ENCODE measurements at regions of chr2 and their contacts with region 1.

Region 1: DNA sequence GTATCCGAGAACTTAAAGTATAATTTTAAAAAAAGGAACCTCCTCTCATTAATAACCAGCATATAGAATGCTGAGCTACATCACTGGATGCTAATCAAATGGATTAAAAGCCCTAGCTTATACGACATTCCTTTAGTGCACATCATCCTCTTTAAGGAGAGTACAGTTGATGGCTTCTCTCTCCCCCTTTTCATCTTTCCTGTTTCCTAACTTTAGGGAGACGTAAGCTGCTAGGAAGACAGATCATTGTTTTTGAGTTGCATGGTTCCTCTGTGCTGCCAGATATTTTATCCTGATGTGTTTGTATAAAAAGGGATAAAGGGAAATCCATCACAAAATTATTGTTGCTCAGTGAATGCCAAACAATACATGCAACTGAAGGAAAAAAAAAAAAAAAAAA is 94.2 kb downstream of the SLC8A1 start:
- DNase-seq: no peak
- H3K4me3 Mint-ChIP-seq: no peak overlapping the region
- H3K27ac Mint-ChIP-seq: no peak overlapping the region
- H3K4me1 Mint-ChIP-seq: no peaks in the 10 kb centered on the region
- H3K27me3 Mint-ChIP-seq: no peaks in the 10 kb centered on the region
- CTCF ChIP-seq: no peak

Region 2: DNA sequence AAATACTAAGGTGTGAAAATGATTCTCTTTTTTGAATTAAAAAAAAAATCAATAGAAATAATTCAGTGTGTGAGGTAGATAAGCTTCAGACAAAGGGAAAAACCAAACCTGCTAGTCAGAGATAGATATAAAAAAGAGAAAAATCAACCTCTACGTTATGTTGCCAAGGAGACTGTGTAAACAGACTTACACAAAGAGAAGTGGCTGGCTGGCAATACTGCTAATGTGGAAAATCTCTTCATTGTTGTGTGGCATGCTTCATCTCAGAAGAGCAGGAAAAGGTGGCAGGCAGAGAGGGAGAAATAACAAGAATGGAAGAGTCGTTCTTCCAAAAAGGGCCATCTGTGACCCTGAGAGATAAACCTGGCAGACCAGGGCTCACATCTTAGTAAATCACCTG is 106.5 kb before region 1 on chr2:
- CTCF ChIA-PET with region 1: no interaction called
- intact Hi-C with region 1: loop called (anchors 2 kb)
- DNase-seq: no peak
- H3K4me3 Mint-ChIP-seq: no peak overlapping the region
- H3K27ac Mint-ChIP-seq: peak overlapping the region; percentile 63
- H3K4me1 Mint-ChIP-seq: no peaks in the 10 kb centered on the region
- H3K27me3 Mint-ChIP-seq: no peaks in the 10 kb centered on the region
- CTCF ChIP-seq: no peak

Region 3: GRCh38 chr2:40736153-40736552 is 378.5 kb after region 1 on chr2:
- CTCF ChIA-PET with region 1: interaction called, 13 read pairs
- intact Hi-C with region 1: no loop called
- DNase-seq: no peak
- H3K4me3 Mint-ChIP-seq: no peak overlapping the region
- H3K27ac Mint-ChIP-seq: no peak overlapping the region
- H3K4me1 Mint-ChIP-seq: no peaks in the 10 kb centered on the region
- H3K27me3 Mint-ChIP-seq: no peaks in the 10 kb centered on the region
- CTCF ChIP-seq: no peak